Right cardiac atrium (tissue), 5 donors: ENCODE measurements at regions of chr9 and their contacts with region 1.

Region 1: GRCh38 chr9:116149844-116150243 is 3.7 kb upstream of the PAPPA start:
- DNase-seq: no peak
- ATAC-seq: peak in 1 of 2 donors; percentile 49
- H3K4me3 ChIP-seq: no peak overlapping the region
- H3K27ac ChIP-seq: no peak overlapping the region
- H3K4me1 ChIP-seq: no peaks in the 10 kb centered on the region
- H3K27me3 ChIP-seq: no peaks in the 10 kb centered on the region

Region 2: DNA sequence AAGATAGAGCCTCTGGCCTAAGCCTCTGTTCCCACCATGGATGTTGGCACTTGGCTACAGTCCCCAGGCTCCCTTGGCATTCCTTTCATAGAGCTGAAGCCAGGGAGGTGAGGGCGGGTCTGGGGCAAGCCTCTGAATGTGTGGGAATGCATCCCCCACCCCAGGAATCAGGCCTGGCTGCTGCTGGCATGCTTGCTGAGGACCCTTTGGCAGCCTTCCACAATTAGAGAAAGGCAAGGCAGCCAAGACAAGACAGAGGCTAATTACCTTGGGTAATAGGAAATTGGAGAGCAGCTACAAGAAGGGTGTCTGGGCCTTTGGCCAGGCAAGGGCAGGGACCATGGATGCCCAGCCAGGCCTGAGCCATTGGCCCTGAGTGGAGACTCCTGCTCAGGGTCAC is 332.9 kb after region 1 on chr9:
- intact Hi-C with region 1: loop called in 1 of 4 experiments (anchors 10 kb)
- DNase-seq: peak in 2 of 3 donors; percentile 56 to 57
- ATAC-seq: peak; percentile 50 to 54
- H3K4me3 ChIP-seq: no peak overlapping the region
- H3K27ac ChIP-seq: peak overlapping the region; percentile 20
- H3K4me1 ChIP-seq: peaks cover 13% of the 10 kb centered on the region
- H3K27me3 ChIP-seq: no peaks in the 10 kb centered on the region

Region 3: DNA sequence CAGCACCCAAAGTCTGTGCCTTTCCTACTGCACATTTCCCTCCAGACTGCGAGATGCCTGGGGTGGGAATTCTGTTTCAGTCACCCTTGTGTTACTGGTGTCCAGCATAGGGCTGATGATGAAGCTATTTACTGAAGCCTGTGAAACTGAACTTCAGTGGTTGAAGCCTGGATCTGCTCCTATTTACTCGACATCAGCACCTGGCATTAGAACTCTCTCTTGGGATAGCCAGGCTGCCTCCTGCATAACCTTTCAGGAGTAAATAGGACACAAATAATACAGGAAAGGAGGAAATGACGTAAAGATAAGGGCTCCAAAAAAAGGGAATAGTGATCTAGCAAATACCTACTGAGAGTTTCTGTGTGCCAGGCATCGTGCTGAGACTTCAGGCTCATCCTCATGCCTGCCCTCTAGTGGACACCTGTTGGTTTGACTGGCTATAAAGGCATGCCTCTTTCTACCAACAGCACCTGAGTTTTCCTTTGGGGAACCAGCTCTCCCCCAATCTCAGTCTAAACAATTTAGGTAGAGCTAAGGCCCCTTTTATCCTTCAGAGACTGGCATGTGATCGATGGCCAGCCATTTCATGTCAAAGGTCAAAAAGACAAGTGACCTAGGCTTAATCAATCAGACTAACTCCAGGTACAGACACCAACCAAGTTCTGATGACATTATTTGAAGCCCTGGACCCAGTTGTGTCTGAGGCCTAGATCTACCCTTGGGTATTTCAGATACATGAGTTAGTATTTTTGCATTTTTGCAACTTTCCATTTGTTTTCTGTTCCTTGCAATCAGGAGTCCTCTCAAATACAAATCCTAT is 345.2 kb after region 1 on chr9:
- intact Hi-C with region 1: loop called in 1 of 4 experiments (anchors 10 kb)
- DNase-seq: peak in 1 of 3 donors; percentile 53
- ATAC-seq: peak in 1 of 2 donors; percentile 48
- H3K4me3 ChIP-seq: no peak overlapping the region
- H3K27ac ChIP-seq: no peak overlapping the region
- H3K4me1 ChIP-seq: peaks cover 3% of the 10 kb centered on the region
- H3K27me3 ChIP-seq: no peaks in the 10 kb centered on the region

Region 4: GRCh38 chr9:116572095-116572748 is 422.4 kb after region 1 on chr9:
- intact Hi-C with region 1: loop called (anchors 5 to 10 kb)
- DNase-seq: peak; percentile 94 to 98 (median 97)
- ATAC-seq: peak; percentile 97
- H3K4me3 ChIP-seq: no peak overlapping the region
- H3K27ac ChIP-seq: no peak overlapping the region
- H3K4me1 ChIP-seq: peaks cover 5% of the 10 kb centered on the region
- H3K27me3 ChIP-seq: no peaks in the 10 kb centered on the region

Region 5: DNA sequence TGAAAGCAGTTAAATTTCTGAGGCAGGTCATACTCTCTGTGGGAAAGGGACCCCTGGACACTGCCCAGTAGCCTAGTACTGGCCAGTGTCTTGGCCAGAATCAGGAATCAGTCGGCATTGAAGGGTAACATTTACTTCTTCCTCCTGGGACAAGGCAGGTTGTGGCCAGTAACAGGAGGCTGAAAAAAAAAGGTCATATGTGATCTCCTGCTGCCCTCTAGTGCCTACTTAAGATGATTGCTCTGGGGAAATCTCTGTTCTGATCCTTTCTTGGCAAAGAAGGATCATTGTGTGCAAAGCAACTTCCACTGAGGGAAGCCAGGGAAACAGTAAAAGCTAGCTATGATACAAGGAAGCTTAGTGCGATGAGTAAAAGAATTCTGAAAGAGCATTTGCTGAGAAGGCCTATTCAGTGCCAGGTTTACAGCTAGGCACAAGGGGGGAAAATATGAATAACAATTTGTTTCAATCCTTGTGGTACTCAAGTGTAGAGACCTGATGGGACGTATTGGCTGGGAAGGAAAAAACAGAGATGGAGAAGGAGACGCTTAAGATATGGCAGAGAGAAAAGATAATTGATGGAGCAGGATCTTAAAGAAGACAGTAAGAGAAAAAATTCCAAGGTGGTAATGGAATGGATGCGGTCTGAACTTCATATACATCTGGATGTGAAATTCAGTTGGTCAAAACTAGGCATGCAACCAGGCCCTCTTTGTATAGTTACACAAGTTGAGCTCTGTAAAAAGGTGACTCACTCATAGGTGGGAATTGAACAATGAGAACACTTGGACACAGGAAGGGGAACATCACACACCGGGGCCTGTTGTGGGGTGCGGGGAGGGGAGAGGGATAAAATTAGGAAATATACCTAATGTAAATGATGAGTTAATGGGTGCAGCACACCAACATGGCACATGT is 511.5 kb after region 1 on chr9:
- intact Hi-C with region 1: loop called in 3 of 4 experiments (anchors 5 to 10 kb)
- DNase-seq: no peak
- ATAC-seq: peak; percentile 81 to 84
- H3K4me3 ChIP-seq: no peak overlapping the region
- H3K27ac ChIP-seq: no peak overlapping the region
- H3K4me1 ChIP-seq: peaks cover 3% of the 10 kb centered on the region
- H3K27me3 ChIP-seq: no peaks in the 10 kb centered on the region